Left ventricle myocardium inferior (tissue), 1 donor: ENCODE measurements at regions of chr12 and their contacts with region 1.

Region 1: GRCh38 chr12:96516472-96517430 is 27.4 kb downstream of the CFAP54 start:
- DNase-seq: peak; percentile 75
- H3K4me3 ChIP-seq: peak overlapping the region; percentile 3
- H3K27ac ChIP-seq: no peak overlapping the region
- H3K4me1 ChIP-seq: peaks cover 5% of the 10 kb centered on the region
- H3K27me3 ChIP-seq: no peaks in the 10 kb centered on the region
- CTCF ChIP-seq: peak; percentile 71

Region 2: DNA sequence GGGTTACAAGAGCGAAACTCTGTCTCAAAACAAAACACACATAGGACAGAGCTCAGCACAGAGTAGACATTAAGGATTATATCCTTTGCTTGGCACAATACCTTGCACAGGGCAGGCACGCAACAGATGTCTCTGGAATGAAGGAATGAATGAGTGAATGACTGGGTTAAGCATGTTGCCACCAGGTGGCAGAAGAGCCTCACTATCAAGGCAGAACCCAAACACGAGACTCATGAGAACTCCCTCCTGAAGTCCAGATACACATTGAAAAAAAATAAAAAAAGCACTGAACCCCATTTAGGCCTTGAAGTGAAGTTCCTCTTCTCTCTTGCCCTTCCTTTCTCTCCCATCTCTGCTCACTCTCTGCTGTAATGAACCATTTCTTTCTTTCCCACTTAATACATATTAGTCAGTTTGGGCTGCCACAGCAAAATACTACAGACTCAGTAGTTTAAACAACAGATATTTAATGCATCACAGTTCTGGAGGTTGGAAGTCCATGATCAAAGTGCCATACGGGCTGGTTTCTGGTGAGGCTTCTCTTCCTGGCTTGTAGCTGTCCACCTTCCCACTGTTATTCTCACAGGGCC is 454.8 kb before region 1 on chr12:
- intact Hi-C with region 1: loop called (anchors 5 kb)
- DNase-seq: peak; percentile 61
- H3K4me3 ChIP-seq: no peak overlapping the region
- H3K27ac ChIP-seq: peak overlapping the region; percentile 9
- H3K4me1 ChIP-seq: peaks cover 22% of the 10 kb centered on the region
- H3K27me3 ChIP-seq: no peaks in the 10 kb centered on the region
- CTCF ChIP-seq: peak; percentile 89

Region 3: DNA sequence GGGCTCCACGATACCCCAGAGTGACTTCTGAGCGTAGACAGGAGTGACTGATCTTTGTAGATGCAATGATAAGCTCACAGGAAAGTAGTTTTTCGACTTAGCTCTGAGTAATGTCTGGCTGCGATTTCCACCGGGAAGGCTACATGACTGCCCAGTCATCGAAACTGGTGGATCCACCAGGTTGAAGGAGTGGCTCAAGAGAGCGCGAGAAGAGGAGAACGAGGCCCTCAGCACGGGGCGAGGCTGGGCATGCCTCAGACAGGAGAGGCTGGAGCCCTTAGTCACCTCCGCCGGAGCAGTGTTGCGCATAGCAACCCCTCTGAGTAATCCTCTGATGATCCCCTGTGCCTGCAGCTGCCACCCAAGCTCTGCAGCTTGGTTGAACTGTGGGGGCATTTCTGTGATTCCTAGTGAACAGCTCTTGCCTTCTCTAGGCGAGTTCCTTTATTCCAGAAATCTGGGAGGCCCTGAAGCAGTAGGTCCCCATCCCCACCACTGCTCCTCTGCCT is 297.0 kb before region 1 on chr12:
- intact Hi-C with region 1: loop called (anchors 10 kb)
- DNase-seq: no peak
- H3K4me3 ChIP-seq: no peak overlapping the region
- H3K27ac ChIP-seq: peak overlapping the region; percentile 50
- H3K4me1 ChIP-seq: peaks cover 87% of the 10 kb centered on the region
- H3K27me3 ChIP-seq: no peaks in the 10 kb centered on the region
- CTCF ChIP-seq: no peak

Region 4: DNA sequence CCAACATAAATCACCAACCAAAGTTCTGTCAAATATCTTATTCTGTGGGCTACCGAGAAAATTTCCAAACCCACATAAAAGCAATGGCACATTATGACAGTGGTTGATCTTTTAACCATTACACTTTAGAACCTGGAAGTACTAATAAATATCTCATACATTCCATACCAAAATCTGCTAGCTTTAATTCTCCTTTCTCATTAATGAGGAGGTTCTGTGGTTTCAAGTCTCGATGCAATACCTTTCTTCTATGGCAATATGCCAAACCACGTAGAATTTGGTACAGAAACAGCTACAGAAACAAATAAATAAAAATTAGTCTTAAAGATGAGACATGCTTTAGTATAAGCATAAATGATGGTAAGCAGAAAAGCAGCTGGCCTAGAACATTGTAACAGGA is 221.9 kb before region 1 on chr12:
- intact Hi-C with region 1: no loop called
- DNase-seq: no peak
- H3K4me3 ChIP-seq: no peak overlapping the region
- H3K27ac ChIP-seq: no peak overlapping the region
- H3K4me1 ChIP-seq: no peaks in the 10 kb centered on the region
- H3K27me3 ChIP-seq: no peaks in the 10 kb centered on the region
- CTCF ChIP-seq: no peak

Region 5: GRCh38 chr12:96578526-96579125 is 61.9 kb after region 1 on chr12:
- intact Hi-C with region 1: no loop called
- DNase-seq: no peak
- H3K4me3 ChIP-seq: no peak overlapping the region
- H3K27ac ChIP-seq: no peak overlapping the region
- H3K4me1 ChIP-seq: no peaks in the 10 kb centered on the region
- H3K27me3 ChIP-seq: peaks cover 3% of the 10 kb centered on the region
- CTCF ChIP-seq: peak; percentile 71

Region 6: GRCh38 chr12:96862337-96862736 is 345.6 kb after region 1 on chr12:
- intact Hi-C with region 1: no loop called
- DNase-seq: no peak
- H3K4me3 ChIP-seq: no peak overlapping the region
- H3K27ac ChIP-seq: no peak overlapping the region
- H3K4me1 ChIP-seq: no peaks in the 10 kb centered on the region
- H3K27me3 ChIP-seq: peaks cover 3% of the 10 kb centered on the region
- CTCF ChIP-seq: no peak